Activated CD4-positive, alpha-beta T cell treated with anti-CD3 and anti-CD28 coated beads, Interleukin-2, amount 10 ng/mL, durations not matched to agents 24 days and 14 days (primary cell): ENCODE measurements at regions of chr15 and their contacts with region 1.

Region 1: GRCh38 chr15:69713726-69714559 is 261.3 kb downstream of the RPLP1 start:
- DNase-seq: peak; percentile 94
- H3K4me3 Mint-ChIP-seq: peak overlapping the region; percentile 61
- H3K27ac Mint-ChIP-seq: peak overlapping the region; percentile 84
- H3K4me1 Mint-ChIP-seq: peaks cover 52% of the 10 kb centered on the region
- H3K27me3 Mint-ChIP-seq: peaks cover 16% of the 10 kb centered on the region

Region 2: GRCh38 chr15:69468241-69469121 is 245.5 kb before region 1 on chr15:
- intact Hi-C with region 1: loop called (anchors 2 kb)
- DNase-seq: peak; percentile 93
- H3K4me3 Mint-ChIP-seq: peak overlapping the region; percentile 51
- H3K27ac Mint-ChIP-seq: peak overlapping the region; percentile 79
- H3K4me1 Mint-ChIP-seq: peaks cover 24% of the 10 kb centered on the region
- H3K27me3 Mint-ChIP-seq: peaks cover 17% of the 10 kb centered on the region

Region 3: GRCh38 chr15:69576035-69576526 is 137.9 kb before region 1 on chr15:
- intact Hi-C with region 1: loop called (anchors 1 kb)
- DNase-seq: peak; percentile 87
- H3K4me3 Mint-ChIP-seq: no peak overlapping the region
- H3K27ac Mint-ChIP-seq: peak overlapping the region; percentile 30
- H3K4me1 Mint-ChIP-seq: peaks cover 39% of the 10 kb centered on the region
- H3K27me3 Mint-ChIP-seq: peaks cover 9% of the 10 kb centered on the region

Region 4: DNA sequence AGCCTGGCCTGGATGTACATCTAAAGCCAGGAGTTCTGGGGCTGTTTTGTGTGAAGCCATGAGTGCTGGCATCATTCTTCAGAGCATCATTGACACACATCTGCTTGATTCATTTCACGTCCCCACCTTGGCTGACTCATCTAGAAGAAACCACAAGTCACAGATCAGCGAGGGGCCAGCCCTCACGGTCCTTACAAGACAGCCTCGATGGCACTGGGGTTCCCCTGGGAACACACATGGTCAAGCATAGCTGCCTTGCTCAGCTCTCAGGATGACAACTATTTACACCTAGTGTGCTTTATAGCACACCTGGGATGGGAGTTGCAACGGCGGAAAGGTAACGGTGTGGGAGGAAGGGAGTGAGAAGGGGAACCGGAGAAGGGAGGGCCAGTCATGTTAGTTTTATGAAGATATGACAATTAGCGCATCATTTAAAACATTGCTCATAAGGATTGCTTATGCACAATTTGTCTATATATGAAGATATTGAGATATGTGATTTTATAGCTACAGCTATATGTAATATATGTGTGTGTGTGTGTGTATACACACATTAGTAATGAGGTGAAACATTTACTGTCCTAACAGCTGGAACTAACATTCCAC is 34.2 kb before region 1 on chr15:
- intact Hi-C with region 1: loop called (anchors 1 kb)
- DNase-seq: peak; percentile 73
- H3K4me3 Mint-ChIP-seq: peak overlapping the region; percentile 4
- H3K27ac Mint-ChIP-seq: peak overlapping the region; percentile 70
- H3K4me1 Mint-ChIP-seq: peaks cover 22% of the 10 kb centered on the region
- H3K27me3 Mint-ChIP-seq: peaks cover 13% of the 10 kb centered on the region

Region 5: GRCh38 chr15:69760890-69761568 is 47.1 kb after region 1 on chr15:
- intact Hi-C with region 1: loop called (anchors 1 kb)
- DNase-seq: peak; percentile 95
- H3K4me3 Mint-ChIP-seq: peak overlapping the region; percentile 76
- H3K27ac Mint-ChIP-seq: peak overlapping the region; percentile 87
- H3K4me1 Mint-ChIP-seq: peaks cover 77% of the 10 kb centered on the region
- H3K27me3 Mint-ChIP-seq: peaks cover 2% of the 10 kb centered on the region